MCF 10A (cell line): ENCODE measurements at regions of chr20 and their contacts with region 1.

Region 1: GRCh38 chr20:44388466-44389023 is 33.0 kb downstream of the HNF4A start:
- DNase-seq: peak; percentile 81
- H3K4me3 Mint-ChIP-seq: peak overlapping the region; percentile 24
- H3K27ac Mint-ChIP-seq: peak overlapping the region; percentile 13
- H3K4me1 Mint-ChIP-seq: peaks cover 24% of the 10 kb centered on the region
- H3K27me3 Mint-ChIP-seq: no peaks in the 10 kb centered on the region
- CTCF ChIP-seq: peak; percentile 91

Region 2: GRCh38 chr20:44222633-44223368 is 165.7 kb before region 1 on chr20:
- CTCF ChIA-PET with region 1: interaction called, 326 read pairs
- POLR2A ChIA-PET with region 1: interaction called, 36 read pairs
- intact Hi-C with region 1: no loop called
- DNase-seq: no peak
- H3K4me3 Mint-ChIP-seq: no peak overlapping the region
- H3K27ac Mint-ChIP-seq: no peak overlapping the region
- H3K4me1 Mint-ChIP-seq: no peaks in the 10 kb centered on the region
- H3K27me3 Mint-ChIP-seq: no peaks in the 10 kb centered on the region
- CTCF ChIP-seq: no peak

Region 3: GRCh38 chr20:44326391-44327159 is 62.0 kb before region 1 on chr20:
- CTCF ChIA-PET with region 1: interaction called, 13 read pairs
- POLR2A ChIA-PET with region 1: no interaction called
- intact Hi-C with region 1: no loop called
- DNase-seq: no peak
- H3K4me3 Mint-ChIP-seq: peak overlapping the region; percentile 23
- H3K27ac Mint-ChIP-seq: no peak overlapping the region
- H3K4me1 Mint-ChIP-seq: no peaks in the 10 kb centered on the region
- H3K27me3 Mint-ChIP-seq: no peaks in the 10 kb centered on the region
- CTCF ChIP-seq: no peak

Region 4: GRCh38 chr20:44413575-44414345 is 25.2 kb after region 1 on chr20:
- CTCF ChIA-PET with region 1: interaction called, 23 read pairs
- POLR2A ChIA-PET with region 1: no interaction called
- intact Hi-C with region 1: no loop called
- DNase-seq: no peak
- H3K4me3 Mint-ChIP-seq: no peak overlapping the region
- H3K27ac Mint-ChIP-seq: no peak overlapping the region
- H3K4me1 Mint-ChIP-seq: no peaks in the 10 kb centered on the region
- H3K27me3 Mint-ChIP-seq: no peaks in the 10 kb centered on the region
- CTCF ChIP-seq: no peak

Region 5: GRCh38 chr20:44460795-44461141 is 72.2 kb after region 1 on chr20:
- CTCF ChIA-PET with region 1: interaction called, 155 read pairs
- POLR2A ChIA-PET with region 1: interaction called, 11 read pairs
- intact Hi-C with region 1: loop called (anchors 1 kb)
- DNase-seq: peak; percentile 64
- H3K4me3 Mint-ChIP-seq: no peak overlapping the region
- H3K27ac Mint-ChIP-seq: no peak overlapping the region
- H3K4me1 Mint-ChIP-seq: peaks cover 13% of the 10 kb centered on the region
- H3K27me3 Mint-ChIP-seq: no peaks in the 10 kb centered on the region
- CTCF ChIP-seq: peak; percentile 66

Region 6: DNA sequence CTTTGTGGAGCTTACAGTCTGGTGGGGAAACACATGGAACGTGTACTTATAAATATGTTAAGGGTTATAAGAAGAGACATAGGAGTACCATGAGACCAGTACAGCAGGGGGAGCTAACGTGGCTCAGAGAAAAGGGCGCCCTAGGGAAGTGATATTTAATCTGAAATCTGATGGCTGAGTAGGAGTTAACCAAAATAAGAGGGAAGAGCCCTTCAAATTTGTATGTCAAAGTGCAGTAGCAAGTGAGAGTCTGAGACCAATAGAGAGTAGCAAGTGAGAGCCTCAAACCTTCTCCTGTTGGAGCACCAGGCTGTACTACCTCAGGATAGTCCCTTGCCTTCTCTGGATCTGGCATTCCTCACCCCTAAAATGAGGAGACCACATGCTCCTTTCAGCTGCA is 187.8 kb after region 1 on chr20:
- CTCF ChIA-PET with region 1: no interaction called
- POLR2A ChIA-PET with region 1: no interaction called
- intact Hi-C with region 1: no loop called
- DNase-seq: peak; percentile 53
- H3K4me3 Mint-ChIP-seq: no peak overlapping the region
- H3K27ac Mint-ChIP-seq: no peak overlapping the region
- H3K4me1 Mint-ChIP-seq: peaks cover 27% of the 10 kb centered on the region
- H3K27me3 Mint-ChIP-seq: no peaks in the 10 kb centered on the region
- CTCF ChIP-seq: no peak